ENCODE measurements at regions of chr11 and their contacts with region 1.

Region 1: DNA sequence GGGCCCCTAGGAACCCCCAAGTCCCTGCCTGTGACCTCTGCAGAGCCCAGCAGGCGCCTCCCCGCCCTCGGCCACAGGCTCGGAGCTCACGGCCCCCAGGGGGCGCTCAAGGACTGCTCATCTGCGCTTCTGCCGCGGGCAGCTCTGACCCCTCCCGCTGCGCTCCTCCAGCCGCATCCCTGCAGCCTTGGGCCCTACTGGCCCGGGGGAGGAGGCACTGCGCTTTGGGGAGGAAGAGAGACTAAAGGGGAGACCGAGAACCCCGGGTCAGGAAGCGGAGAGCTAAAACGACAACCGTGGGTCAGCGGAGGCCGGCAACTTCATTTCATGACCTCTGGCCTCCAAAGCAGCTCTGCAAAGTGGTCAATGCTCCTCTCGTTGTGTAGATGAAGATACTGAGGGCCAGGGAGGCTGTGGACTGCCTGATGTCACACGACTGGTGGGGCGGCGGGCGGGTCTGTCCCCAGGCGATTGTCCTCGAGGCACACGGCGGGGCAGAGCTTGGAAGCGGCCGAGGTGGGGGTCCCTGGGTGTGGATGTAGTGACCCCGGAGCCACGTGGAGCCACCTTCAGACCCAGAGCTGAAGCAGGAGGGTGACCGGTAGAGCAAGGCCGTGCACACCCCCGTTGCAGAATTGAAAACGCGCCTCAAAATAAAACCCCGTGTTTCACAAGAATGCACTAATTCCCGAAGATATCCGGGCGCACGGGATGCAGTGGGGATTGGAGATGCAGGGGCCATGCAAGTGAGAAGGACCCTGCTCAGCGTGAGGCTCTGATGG is 2.7 kb upstream of the KRTAP5-6 start:
- DNase-seq: peak; percentile 61
- ATAC-seq: peak; percentile 97
- H3K4me3 ChIP-seq: no peak overlapping the region
- H3K27ac ChIP-seq: no peak overlapping the region
- H3K4me1 ChIP-seq: peaks cover 1% of the 10 kb centered on the region; the same call in 1 of the 2 replicates
- H3K27me3 ChIP-seq: peaks cover 55% of the 10 kb centered on the region
- CTCF ChIP-seq: peak; percentile 94
- POLR2A ChIP-seq: no peak
- RAD21 ChIP-seq: peak; percentile 93

Region 2: DNA sequence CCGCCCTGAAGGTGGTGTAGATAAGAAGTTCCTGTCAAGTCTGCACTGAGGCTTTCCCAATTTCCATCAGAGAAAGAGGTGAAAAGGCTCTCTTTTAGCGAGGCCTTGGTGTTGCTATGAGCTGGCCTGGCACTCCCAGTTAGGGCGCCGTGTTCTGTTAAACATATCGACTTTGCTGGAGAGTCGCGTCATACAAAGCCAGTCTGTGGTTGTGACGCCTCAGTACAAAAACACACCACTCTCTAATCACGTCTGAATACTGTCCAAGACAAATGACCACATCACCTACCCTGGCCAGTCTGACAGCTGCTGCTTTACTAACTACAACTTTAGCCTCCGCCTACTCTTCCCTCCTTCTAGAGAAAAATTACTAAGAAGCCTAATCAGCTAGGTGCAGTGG is 376.8 kb before region 1 on chr11:
- CTCF ChIA-PET with region 1: no interaction called
- POLR2A ChIA-PET with region 1: no interaction called
- dilution Hi-C with region 1: no loop called
- in situ Hi-C with region 1: no loop called
- intact Hi-C with region 1: no loop called
- DNase-seq: no peak
- ATAC-seq: no peak
- H3K4me3 ChIP-seq: no peak overlapping the region
- H3K27ac ChIP-seq: no peak overlapping the region
- H3K4me1 ChIP-seq: no peaks in the 10 kb centered on the region
- H3K27me3 ChIP-seq: peaks cover 9% of the 10 kb centered on the region
- CTCF ChIP-seq: no peak
- POLR2A ChIP-seq: no peak
- RAD21 ChIP-seq: no peak

Region 3: GRCh38 chr11:1820463-1821325 is 126.4 kb after region 1 on chr11:
- CTCF ChIA-PET with region 1: no interaction called
- POLR2A ChIA-PET with region 1: no interaction called
- dilution Hi-C with region 1: no loop called
- in situ Hi-C with region 1: loop called (anchors 5 kb)
- intact Hi-C with region 1: no loop called
- DNase-seq: peak; percentile 22
- ATAC-seq: peak; percentile 81
- H3K4me3 ChIP-seq: no peak overlapping the region
- H3K27ac ChIP-seq: no peak overlapping the region
- H3K4me1 ChIP-seq: no peaks in the 10 kb centered on the region
- H3K27me3 ChIP-seq: peaks cover 20% of the 10 kb centered on the region
- CTCF ChIP-seq: no peak
- POLR2A ChIP-seq: no peak
- RAD21 ChIP-seq: no peak

Region 4: DNA sequence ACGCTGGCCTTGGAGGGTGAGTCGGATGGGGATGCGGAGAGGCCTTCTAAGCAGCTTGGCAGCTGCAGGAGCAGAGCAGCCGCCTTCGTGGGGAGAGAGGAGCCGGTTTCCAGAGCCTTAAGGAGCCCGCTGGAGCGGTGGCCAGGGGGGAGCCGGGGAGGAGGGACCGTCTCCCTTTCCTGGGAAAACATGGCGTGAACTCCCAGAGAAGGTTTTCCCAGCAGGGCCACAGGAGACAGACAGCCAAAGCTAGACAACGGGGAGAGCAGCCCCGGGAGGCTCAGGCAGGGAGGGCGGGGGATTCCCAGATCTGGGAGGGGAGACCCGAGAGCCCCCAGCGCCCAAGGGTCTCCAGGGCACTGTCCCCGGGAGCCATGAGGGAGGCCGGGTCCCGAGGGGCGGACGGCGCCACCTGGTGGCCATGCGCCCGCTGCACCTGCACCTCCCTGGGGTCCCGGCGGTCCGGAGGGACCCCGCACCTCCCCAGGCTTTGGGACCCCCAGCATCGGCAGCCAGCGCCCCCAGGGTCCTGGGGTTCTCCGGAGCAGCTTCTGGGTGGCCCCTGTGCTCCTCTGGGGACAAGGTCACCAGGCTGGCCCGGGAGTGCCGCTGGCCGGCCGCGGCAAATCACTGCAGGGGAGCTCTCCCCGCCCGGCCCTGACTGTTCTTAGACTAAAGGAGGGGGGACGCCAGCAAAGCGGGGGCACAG is 138.1 kb after region 1 on chr11:
- CTCF ChIA-PET with region 1: interaction called, 54 read pairs
- POLR2A ChIA-PET with region 1: no interaction called
- dilution Hi-C with region 1: no loop called
- in situ Hi-C with region 1: no loop called
- intact Hi-C with region 1: loop called (anchors 1 kb)
- DNase-seq: no peak
- ATAC-seq: peak; percentile 62; the same call in 1 of the 2 replicates
- H3K4me3 ChIP-seq: no peak overlapping the region
- H3K27ac ChIP-seq: no peak overlapping the region
- H3K4me1 ChIP-seq: peaks cover 8% of the 10 kb centered on the region
- H3K27me3 ChIP-seq: peaks cover 16% of the 10 kb centered on the region; the same call in 1 of the 2 replicates
- CTCF ChIP-seq: peak; percentile 80
- POLR2A ChIP-seq: no peak
- RAD21 ChIP-seq: peak; percentile 83

Region 5: GRCh38 chr11:2217211-2218030 is 523.2 kb after region 1 on chr11:
- CTCF ChIA-PET with region 1: no interaction called
- POLR2A ChIA-PET with region 1: no interaction called
- dilution Hi-C with region 1: no loop called
- in situ Hi-C with region 1: no loop called
- intact Hi-C with region 1: no loop called
- DNase-seq: no peak
- ATAC-seq: no peak
- H3K4me3 ChIP-seq: no peak overlapping the region
- H3K27ac ChIP-seq: no peak overlapping the region
- H3K4me1 ChIP-seq: no peaks in the 10 kb centered on the region
- H3K27me3 ChIP-seq: peaks cover 46% of the 10 kb centered on the region
- CTCF ChIP-seq: no peak
- POLR2A ChIP-seq: no peak
- RAD21 ChIP-seq: no peak

Measured in IMR-90 (cell line).